Esophagus muscularis mucosa (tissue), 4 donors: ENCODE measurements at regions of chr17 and their contacts with region 1.

Region 1: DNA sequence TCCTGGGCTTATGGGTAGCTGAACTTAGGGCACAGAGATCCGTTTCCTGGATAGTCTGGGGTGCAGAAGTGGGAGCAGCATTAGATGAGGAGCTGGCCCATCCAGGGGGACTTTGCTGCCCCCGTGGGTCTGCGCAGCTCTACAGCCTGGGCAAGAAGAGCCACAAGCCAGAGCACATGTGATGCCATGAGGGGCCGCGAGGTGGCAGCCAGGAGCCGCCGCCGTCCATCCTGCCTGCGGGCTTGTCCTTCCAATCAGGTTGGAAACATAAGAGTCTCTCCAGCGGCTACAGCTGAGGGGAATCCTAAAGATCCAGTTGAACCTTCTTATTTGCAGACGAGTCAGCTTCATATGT is 21.9 kb downstream of the C1QTNF1 start:
- DNase-seq: no peak
- H3K4me3 ChIP-seq: no peak overlapping the region
- H3K27ac ChIP-seq: peak overlapping the region in 2 of 4 donors; percentile 45 to 61
- H3K4me1 ChIP-seq: peaks cover 24 to 42% (median 29%) of the 10 kb centered on the region in 4 donors
- H3K27me3 ChIP-seq: no peaks in the 10 kb centered on the region
- CTCF ChIP-seq: peak; percentile 86 to 99 (median 91)
- EP300 ChIP-seq: no peak
- POLR2A ChIP-seq: no peak

Region 2: GRCh38 chr17:79082311-79083190 is 36.7 kb after region 1 on chr17:
- intact Hi-C with region 1: loop called (anchors 5 kb)
- DNase-seq: no peak
- H3K4me3 ChIP-seq: no peak overlapping the region
- H3K27ac ChIP-seq: no peak overlapping the region
- H3K4me1 ChIP-seq: peaks cover 0 to 10% (median 7%) of the 10 kb centered on the region in 4 donors
- H3K27me3 ChIP-seq: no peaks in the 10 kb centered on the region
- CTCF ChIP-seq: peak; percentile 69 to 92 (median 77)
- EP300 ChIP-seq: no peak
- POLR2A ChIP-seq: no peak